GM10248 (cell line): ENCODE measurements at regions of chr19 and their contacts with region 1.

Region 1: DNA sequence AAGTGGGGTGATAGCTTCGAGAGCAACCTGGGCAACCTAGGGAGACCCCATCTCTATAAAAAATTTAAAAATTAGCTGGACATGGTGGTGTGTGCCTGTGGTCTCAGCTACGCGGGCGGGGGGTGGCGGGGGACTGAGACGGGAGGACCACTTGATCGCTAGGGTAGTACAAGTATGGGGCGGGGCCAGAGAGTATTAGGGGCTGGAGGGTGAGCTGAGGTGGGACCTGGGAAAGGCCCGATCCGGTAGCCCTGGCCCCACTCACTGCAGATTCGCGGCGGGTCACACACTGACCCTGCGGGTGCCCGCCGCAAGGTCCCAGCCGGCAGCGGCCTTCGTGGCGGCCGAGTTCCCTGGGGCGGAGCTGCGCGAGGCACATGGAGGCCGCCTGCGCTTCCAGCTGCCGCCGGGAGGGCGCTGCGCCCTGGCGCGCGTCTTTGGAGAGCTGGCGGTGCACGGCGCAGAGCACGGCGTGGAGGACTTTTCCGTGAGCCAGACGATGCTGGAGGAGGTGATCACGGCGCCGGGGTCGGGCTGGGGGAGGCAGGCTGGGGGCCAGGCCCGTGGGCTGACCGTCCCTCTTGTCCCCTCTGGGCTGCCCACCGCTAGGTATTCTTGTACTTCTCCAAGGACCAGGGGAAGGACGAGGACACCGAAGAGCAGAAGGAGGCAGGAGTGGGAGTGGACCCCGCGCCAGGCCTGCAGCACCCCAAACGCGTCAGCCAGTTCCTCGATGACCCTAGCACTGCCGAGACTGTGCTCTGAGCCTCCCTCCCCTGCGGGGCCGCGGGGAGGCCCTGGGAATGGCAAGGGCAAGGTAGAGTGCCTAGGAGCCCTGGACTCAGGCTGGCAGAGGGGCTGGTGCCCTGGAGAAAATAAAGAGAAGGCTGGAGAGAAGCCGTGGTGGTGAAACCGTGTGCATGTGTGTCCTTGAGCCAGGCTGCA is 2.0 kb upstream of the ARHGAP45 start:
- DNase-seq: peak; percentile 79
- CTCF ChIP-seq: peak; percentile 77

Region 2: GRCh38 chr19:1046836-1047695 is 17.9 kb before region 1 on chr19:
- CTCF ChIA-PET with region 1: interaction called, 10 read pairs
- POLR2A ChIA-PET with region 1: interaction called, 5 read pairs
- DNase-seq: no peak
- CTCF ChIP-seq: no peak

Region 3: GRCh38 chr19:1054102-1055027 is 10.6 kb before region 1 on chr19:
- CTCF ChIA-PET with region 1: interaction called, 15 read pairs
- POLR2A ChIA-PET with region 1: no interaction called
- DNase-seq: no peak
- CTCF ChIP-seq: no peak